Activated CD4-positive, alpha-beta T cell treated with anti-CD3 and anti-CD28 coated beads, Interleukin-2, amount 10 ng/mL, durations not matched to agents 24 days and 14 days (primary cell): ENCODE measurements at regions of chr5 and their contacts with region 1.

Region 1: GRCh38 chr5:176361437-176362232 is at the start of gene KIAA1191:
- DNase-seq: peak; percentile 98
- H3K4me3 Mint-ChIP-seq: peak within 1 kb of the TSS; percentile 96
- H3K27ac Mint-ChIP-seq: peak within 1 kb of the TSS; percentile 93
- H3K4me1 Mint-ChIP-seq: peaks cover 21% of the 10 kb centered on the region
- H3K27me3 Mint-ChIP-seq: no peaks in the 10 kb centered on the region
- total RNA-seq, gene KIAA1191: 55.5 and 59.7 TPM in 2 replicates

Region 2: DNA sequence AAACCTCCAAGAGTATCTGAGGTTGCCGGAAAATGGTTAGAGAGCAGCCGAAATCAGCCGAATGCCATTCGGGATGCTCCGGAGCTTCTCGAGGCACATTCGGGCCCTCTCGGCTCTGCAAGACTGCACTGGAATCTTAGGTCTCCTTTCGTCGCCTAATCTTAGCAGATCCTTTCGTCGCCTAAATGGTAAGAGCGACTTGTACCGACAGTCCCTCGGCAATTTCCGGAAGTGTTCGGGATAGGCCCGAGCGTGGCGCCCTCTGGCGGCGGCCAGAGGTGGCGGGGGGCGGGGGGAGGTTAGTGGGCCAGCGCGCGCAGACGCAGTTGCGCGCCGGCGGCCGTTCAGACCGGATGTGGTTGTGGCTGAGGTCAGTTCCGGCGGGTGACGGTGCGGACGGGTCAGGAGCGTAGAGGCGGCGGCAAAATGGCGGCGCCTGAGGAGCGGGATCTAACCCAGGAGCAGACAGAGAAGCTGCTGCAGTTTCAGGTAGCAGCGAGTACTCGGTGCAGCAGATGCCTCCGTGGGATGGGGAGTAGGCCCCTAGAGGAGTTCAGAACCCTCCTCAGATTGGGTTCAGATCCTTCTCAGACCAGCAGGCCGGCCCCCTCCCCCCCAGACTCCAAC is 86.5 kb after region 1 on chr5 and contains the start of gene FAF2:
- intact Hi-C with region 1: loop called (anchors 2 kb)
- DNase-seq: peak; percentile 100
- H3K4me3 Mint-ChIP-seq: peak within 1 kb of the TSS; percentile 93
- H3K27ac Mint-ChIP-seq: peak within 1 kb of the TSS; percentile 94
- H3K4me1 Mint-ChIP-seq: peaks cover 30% of the 10 kb centered on the region
- H3K27me3 Mint-ChIP-seq: peaks cover 2% of the 10 kb centered on the region
- total RNA-seq, gene FAF2: 42.8 and 43.9 TPM in 2 replicates